ENCODE measurements at regions of chr3 and their contacts with region 1.

Region 1: GRCh38 chr3:100463002-100463401 is 29.4 kb upstream of the TMEM45A start:
- DNase-seq: peak in 1 of 2 donors; percentile 35
- ATAC-seq: peak in 7 of 8 donors; percentile 71 to 81 (median 75)
- H3K4me3 ChIP-seq: no peak overlapping the region
- H3K27ac ChIP-seq: no peak overlapping the region
- H3K4me1 ChIP-seq: peaks cover 0 to 7% (median 0%) of the 10 kb centered on the region in 9 donors
- H3K27me3 ChIP-seq: no peaks in the 10 kb centered on the region
- CTCF ChIP-seq: peak; percentile 33 to 78 (median 69)

Region 2: GRCh38 chr3:100796556-100796955 is 333.6 kb after region 1 on chr3:
- intact Hi-C with region 1: loop called in 2 of 10 experiments (anchors 10 kb)
- DNase-seq: no peak
- ATAC-seq: no peak
- H3K4me3 ChIP-seq: no peak overlapping the region
- H3K27ac ChIP-seq: no peak overlapping the region
- H3K4me1 ChIP-seq: peaks cover 0 to 6% (median 0%) of the 10 kb centered on the region in 9 donors
- H3K27me3 ChIP-seq: no peaks in the 10 kb centered on the region
- CTCF ChIP-seq: peak in 7 of 9 donors; percentile 13 to 53 (median 44)

Region 3: GRCh38 chr3:101195951-101196713 is 733.1 kb after region 1 on chr3:
- intact Hi-C with region 1: loop called in 2 of 10 experiments (anchors 10 kb)
- DNase-seq: peak in 1 of 2 donors; percentile 10
- ATAC-seq: peak in 7 of 8 donors; percentile 63 to 87 (median 78)
- H3K4me3 ChIP-seq: no peak overlapping the region
- H3K27ac ChIP-seq: no peak overlapping the region
- H3K4me1 ChIP-seq: peaks cover 0 to 4% (median 0%) of the 10 kb centered on the region in 9 donors
- H3K27me3 ChIP-seq: no peaks in the 10 kb centered on the region
- CTCF ChIP-seq: peak; percentile 11 to 77 (median 62)